Dorsolateral prefrontal cortex (tissue), 120 donors: ENCODE measurements at regions of chr19 and their contacts with region 1.

Region 1: DNA sequence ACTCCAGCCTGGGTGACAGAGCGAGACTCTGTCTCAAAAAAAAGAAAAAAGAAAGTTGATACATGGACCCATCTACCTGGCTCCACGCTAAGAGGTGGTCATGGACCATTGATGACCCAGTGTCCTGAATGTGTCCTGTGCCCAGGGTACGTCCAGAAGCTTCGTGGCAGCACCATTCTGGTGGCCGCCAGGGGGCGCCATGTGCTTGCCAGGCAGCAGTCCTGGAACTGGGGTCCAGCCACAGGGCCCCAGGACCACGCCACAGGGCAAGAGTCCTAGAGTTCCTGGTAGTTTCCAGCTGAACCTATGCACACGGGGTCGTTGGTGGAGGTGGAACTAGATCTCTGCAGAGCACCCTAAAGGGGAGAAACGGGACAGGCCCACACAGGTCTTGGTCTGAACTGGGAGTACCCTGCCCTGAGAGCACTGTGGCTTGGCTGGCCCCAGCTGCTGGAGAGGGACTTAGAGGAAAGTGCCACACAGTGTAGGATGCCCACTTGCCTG is 19.9 kb upstream of the FBXO27 start:
- DNase-seq: peak; percentile 65 to 89 (median 84)
- H3K4me3 ChIP-seq: peak overlapping the region in 2 of 59 donors; percentile 24 to 32
- H3K27ac ChIP-seq: peak overlapping the region; percentile 69 to 100 (median 97)
- H3K27me3 ChIP-seq: no peaks in the 10 kb centered on the region
- CTCF ChIP-seq: peak; percentile 52 to 95 (median 88)

Region 2: GRCh38 chr19:39078436-39079200 is 26.3 kb after region 1 on chr19:
- intact Hi-C with region 1: loop called in 1 of 2 experiments (anchors 1 kb)
- DNase-seq: peak in 3 of 10 donors; percentile 32 to 75 (median 57)
- H3K4me3 ChIP-seq: no peak overlapping the region
- H3K27ac ChIP-seq: peak overlapping the region; percentile 9 to 99 (median 91)
- H3K27me3 ChIP-seq: peaks cover 0 to 40% (median 9%) of the 10 kb centered on the region in 45 donors
- CTCF ChIP-seq: peak in 2 of 56 donors; percentile 10 to 20

Region 3: DNA sequence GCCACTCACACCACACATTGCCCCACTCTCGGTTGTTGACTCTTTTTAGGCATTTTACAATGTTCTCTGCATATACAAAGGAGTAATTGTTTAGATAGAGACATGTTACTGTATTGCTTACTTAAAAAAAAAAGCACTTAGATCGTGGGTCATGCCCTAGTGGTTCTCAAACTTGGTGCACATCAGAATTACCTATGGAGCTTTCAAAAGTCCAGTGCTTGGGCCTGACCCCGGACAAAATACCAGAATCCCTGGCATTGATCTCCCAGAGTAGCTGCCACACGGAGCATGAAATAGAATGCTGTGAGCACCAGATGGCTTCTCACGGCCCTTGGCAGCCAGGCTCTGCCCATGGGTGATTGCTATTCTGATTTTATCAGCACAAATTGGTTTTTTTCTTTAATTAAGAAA is 51.9 kb after region 1 on chr19:
- intact Hi-C with region 1: loop called in 1 of 2 experiments (anchors 10 kb)
- DNase-seq: peak in 5 of 10 donors; percentile 41 to 87 (median 43)
- H3K4me3 ChIP-seq: no peak overlapping the region
- H3K27ac ChIP-seq: peak overlapping the region in 58 of 59 donors; percentile 32 to 94 (median 87)
- H3K27me3 ChIP-seq: peaks cover 0 to 9% (median 0%) of the 10 kb centered on the region in 45 donors
- CTCF ChIP-seq: peak in 3 of 56 donors; percentile 9 to 27 (median 13)

Region 4: DNA sequence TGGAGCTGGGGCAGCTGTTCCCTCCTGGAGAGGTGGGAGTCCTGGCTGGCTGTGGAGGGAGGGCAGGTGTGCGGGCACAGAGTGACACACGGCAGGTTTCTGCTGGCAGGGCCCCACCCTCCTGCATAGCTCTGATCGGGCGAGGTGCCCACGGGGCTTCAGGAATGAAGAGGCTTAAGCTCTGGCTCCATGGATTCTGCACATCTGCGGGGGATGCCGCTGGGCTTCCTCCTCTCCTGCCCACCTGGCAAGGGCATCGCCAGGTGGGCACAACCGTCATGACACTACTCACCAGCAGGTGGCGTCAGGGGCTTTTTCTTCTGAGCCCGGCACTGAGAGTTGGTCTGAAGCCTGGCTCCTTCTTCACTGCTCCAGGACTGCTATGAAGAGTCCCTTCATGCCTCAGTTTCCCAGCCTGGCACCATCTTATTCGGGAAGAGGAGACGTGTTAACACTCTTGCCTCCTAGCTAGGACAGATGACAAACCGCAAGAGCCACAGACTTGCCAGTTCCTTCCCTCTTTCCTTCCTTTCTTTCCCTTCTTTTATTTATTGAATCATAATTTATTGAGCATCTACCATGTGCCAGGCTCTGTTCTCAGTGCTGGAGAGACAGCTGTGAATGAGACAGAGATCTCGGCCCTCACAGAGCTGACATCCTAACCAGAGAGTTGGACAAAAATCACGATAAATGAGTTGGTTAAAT is 58.1 kb after region 1 on chr19:
- intact Hi-C with region 1: loop called (anchors 2 to 10 kb)
- DNase-seq: peak in 9 of 10 donors; percentile 64 to 86 (median 68)
- H3K4me3 ChIP-seq: no peak overlapping the region
- H3K27ac ChIP-seq: peak overlapping the region in 43 of 59 donors; percentile 3 to 94 (median 64)
- H3K27me3 ChIP-seq: no peaks in the 10 kb centered on the region
- CTCF ChIP-seq: peak; percentile 57 to 92 (median 83)

Region 5: DNA sequence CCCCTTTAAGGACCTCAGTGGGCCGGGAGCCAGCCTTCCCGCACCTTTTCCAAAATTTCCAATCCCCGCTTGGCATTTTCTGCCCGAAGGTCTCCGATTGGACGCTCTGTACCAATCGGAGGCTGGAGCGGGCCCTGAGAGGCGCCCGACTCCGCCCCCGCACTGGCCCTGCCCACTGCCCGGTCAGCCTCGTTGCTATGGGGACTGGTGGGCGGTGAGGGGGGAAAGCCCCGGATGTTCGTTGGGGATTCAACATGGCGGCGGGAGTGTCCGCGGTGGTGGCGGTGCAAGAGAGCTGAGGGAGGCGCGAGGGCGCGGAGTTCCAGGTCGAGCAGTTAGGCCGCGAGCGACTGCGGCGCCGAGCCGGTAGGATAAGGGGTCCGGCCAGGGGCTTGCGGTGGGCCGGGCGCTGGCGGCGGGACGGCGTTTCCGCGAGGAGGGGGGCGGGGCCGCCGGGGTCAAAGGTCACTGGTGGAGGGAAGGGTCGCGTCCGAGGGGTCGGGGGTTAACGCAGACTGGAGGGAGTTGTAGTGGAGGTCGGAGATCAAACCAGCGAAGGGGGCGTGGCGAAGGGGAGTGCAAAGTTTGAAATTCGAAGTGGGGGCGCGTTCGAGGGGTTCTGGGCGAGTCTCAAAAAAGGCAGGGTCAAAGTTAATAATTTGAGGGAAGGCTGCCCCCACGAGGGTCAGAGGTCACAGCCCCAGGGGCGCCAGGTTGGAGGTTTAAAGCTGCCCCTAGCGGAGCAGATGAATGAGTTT is 73.4 kb after region 1 on chr19 and contains the start of gene PAK4:
- intact Hi-C with region 1: loop called in 1 of 2 experiments (anchors 1 kb)
- DNase-seq: peak; percentile 96 to 99 (median 98)
- H3K4me3 ChIP-seq: peak within 1 kb of the TSS; percentile 63 to 97 (median 88)
- H3K27ac ChIP-seq: peak within 1 kb of the TSS in 57 of 59 donors; percentile 35 to 94 (median 84)
- H3K27me3 ChIP-seq: no peaks in the 10 kb centered on the region
- CTCF ChIP-seq: peak in 28 of 56 donors; percentile 5 to 58 (median 28)
- total RNA-seq, gene PAK4: 16.4 to 55.2 (median 25.7) TPM

Region 6: GRCh38 chr19:39187559-39187957 is 135.3 kb after region 1 on chr19:
- intact Hi-C with region 1: loop called (anchors 5 kb)
- DNase-seq: no peak
- H3K4me3 ChIP-seq: no peak overlapping the region
- H3K27ac ChIP-seq: no peak overlapping the region
- H3K27me3 ChIP-seq: no peaks in the 10 kb centered on the region
- CTCF ChIP-seq: peak in 14 of 56 donors; percentile 0 to 40 (median 8)

Region 7: DNA sequence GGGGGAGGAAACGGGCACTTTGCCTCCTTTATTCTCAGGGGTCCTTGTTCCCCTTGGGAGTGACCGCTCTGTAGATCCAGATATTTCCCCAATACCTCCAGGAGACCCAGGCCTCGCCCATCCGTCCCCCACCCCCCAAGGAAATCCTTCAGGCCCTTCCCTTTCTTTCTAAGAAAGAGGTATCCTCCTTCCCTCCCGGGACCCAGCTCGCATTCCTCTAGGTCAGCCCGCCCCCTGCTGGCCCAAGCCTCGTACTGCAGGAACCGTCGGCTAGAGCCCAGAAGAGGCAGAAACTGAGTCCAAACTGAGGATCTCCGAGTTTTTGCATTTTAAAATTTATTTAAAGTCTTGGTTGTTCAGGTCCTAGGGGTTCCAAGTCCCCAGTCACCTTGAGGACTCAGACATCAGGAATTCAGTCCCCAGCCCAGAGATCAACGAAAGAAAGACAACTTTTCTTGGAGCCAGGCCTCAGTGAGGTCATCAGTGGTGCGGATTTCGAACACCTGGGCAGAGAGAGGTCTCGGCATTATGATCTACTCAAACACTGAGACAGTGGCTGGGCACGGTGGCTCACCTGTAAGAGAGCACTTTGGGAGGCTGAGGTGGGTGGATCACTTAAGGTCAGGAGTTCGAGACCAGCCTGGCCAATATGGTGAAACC is 275.9 kb after region 1 on chr19:
- intact Hi-C with region 1: loop called (anchors 1 to 10 kb)
- DNase-seq: peak; percentile 82 to 94 (median 91)
- H3K4me3 ChIP-seq: peak overlapping the region in 2 of 59 donors; percentile 1 to 11
- H3K27ac ChIP-seq: peak overlapping the region in 3 of 59 donors; percentile 12 to 53 (median 28)
- H3K27me3 ChIP-seq: no peaks in the 10 kb centered on the region
- CTCF ChIP-seq: peak; percentile 77 to 99 (median 96)